ENCODE measurements at regions of chr18 and their contacts with region 1.

Region 1: GRCh38 chr18:58097121-58097906 is 53.3 kb downstream of the NEDD4L start:
- DNase-seq: no peak
- H3K4me3 ChIP-seq: peak overlapping the region in 1 of 59 donors; percentile 5
- H3K27ac ChIP-seq: peak overlapping the region in 6 of 59 donors; percentile 6 to 27 (median 20)
- H3K27me3 ChIP-seq: no peaks in the 10 kb centered on the region
- CTCF ChIP-seq: no peak

Region 2: DNA sequence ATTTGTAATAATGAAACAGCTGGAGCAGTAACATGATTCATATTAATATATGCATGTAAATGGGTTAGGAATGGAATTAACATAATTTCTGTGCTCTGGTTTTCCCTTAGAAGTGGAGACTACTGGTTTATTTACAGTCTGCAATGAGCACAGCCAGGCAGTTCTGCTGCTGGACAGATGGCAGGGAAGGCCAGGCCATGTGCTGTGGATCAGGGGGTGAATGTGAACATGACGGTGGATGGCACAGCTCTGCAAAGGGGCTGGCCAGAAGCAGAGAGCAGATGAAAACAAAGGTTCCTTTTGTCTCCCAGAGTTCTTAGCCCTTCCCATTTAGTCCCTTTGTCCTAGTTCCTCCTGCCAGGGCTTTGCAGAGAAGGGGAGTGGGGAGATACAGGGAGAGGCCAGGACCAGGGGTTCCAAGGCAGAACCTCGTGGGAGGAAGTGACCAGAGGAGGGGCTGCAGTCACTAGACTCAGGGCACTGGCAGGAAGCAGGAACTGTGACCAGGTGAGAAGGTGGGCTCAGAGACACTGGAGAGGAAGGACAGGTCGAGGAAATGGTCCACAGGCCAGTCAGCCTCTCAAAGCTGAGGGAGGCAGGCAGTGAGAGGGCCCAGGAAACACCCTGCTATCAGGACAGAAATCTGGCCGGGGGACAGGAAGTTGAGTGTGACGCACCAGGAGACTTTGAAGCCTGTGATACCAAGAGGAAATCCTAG is 181.3 kb before region 1 on chr18:
- intact Hi-C with region 1: loop called in 1 of 2 experiments (anchors 5 kb)
- DNase-seq: peak; percentile 58 to 87 (median 82)
- H3K4me3 ChIP-seq: no peak overlapping the region
- H3K27ac ChIP-seq: peak overlapping the region in 56 of 59 donors; percentile 8 to 87 (median 70)
- H3K27me3 ChIP-seq: no peaks in the 10 kb centered on the region
- CTCF ChIP-seq: peak in 10 of 56 donors; percentile 8 to 41 (median 18)

Measured in dorsolateral prefrontal cortex (tissue), 120 donors.